Activated T-helper 1 cell treated with anti-CD3 and anti-CD28 coated beads, Interleukin-12 subunit alpha, Interleukin-12 subunit beta, Interleukin-2, Interleukin-4 antibody, amounts not matched to agents 30 ng/mL and 10 ng/mL and 1 ng/mL, durations not matched to agents 14 hours and 24 hours and 36 hours (primary cell): ENCODE measurements at regions of chr6 and their contacts with region 1.

Region 1: GRCh38 chr6:148250975-148251685 is 91.5 kb upstream of the SASH1 start:
- DNase-seq: no peak
- H3K4me3 Mint-ChIP-seq: no peak overlapping the region
- H3K27ac Mint-ChIP-seq: no peak overlapping the region
- H3K4me1 Mint-ChIP-seq: no peaks in the 10 kb centered on the region
- H3K27me3 Mint-ChIP-seq: peaks cover 9% of the 10 kb centered on the region

Region 2: GRCh38 chr6:148177589-148178233 is 73.4 kb before region 1 on chr6:
- intact Hi-C with region 1: loop called (anchors 1 kb)
- DNase-seq: no peak
- H3K4me3 Mint-ChIP-seq: no peak overlapping the region
- H3K27ac Mint-ChIP-seq: no peak overlapping the region
- H3K4me1 Mint-ChIP-seq: no peaks in the 10 kb centered on the region
- H3K27me3 Mint-ChIP-seq: peaks cover 15% of the 10 kb centered on the region

Region 3: GRCh38 chr6:148874698-148875293 is 623.7 kb after region 1 on chr6:
- intact Hi-C with region 1: loop called (anchors 5 kb)
- DNase-seq: no peak
- H3K4me3 Mint-ChIP-seq: no peak overlapping the region
- H3K27ac Mint-ChIP-seq: no peak overlapping the region
- H3K4me1 Mint-ChIP-seq: no peaks in the 10 kb centered on the region
- H3K27me3 Mint-ChIP-seq: no peaks in the 10 kb centered on the region